Natural killer cell (primary cell): ENCODE measurements at regions of chr20 and their contacts with region 1.

Region 1: GRCh38 chr20:8545212-8545611 is 413.1 kb downstream of the PLCB1 start:
- DNase-seq: no peak
- ATAC-seq: no peak
- H3K4me3 ChIP-seq: no peak overlapping the region
- H3K4me3 Mint-ChIP-seq: no peak overlapping the region
- H3K27ac ChIP-seq: no peak overlapping the region
- H3K27ac Mint-ChIP-seq: no peak overlapping the region
- H3K4me1 ChIP-seq: no peaks in the 10 kb centered on the region
- H3K4me1 Mint-ChIP-seq: peaks cover 13 to 32% of the 10 kb centered on the region in 2 donors
- H3K27me3 ChIP-seq: no peaks in the 10 kb centered on the region
- H3K27me3 Mint-ChIP-seq: no peaks in the 10 kb centered on the region
- CTCF ChIP-seq: no peak

Region 2: GRCh38 chr20:8424010-8424409 is 121.2 kb before region 1 on chr20:
- intact Hi-C with region 1: no loop called
- DNase-seq: no peak
- ATAC-seq: no peak
- H3K4me3 ChIP-seq: no peak overlapping the region
- H3K4me3 Mint-ChIP-seq: no peak overlapping the region
- H3K27ac ChIP-seq: no peak overlapping the region
- H3K27ac Mint-ChIP-seq: no peak overlapping the region
- H3K4me1 ChIP-seq: peaks cover 6% of the 10 kb centered on the region
- H3K4me1 Mint-ChIP-seq: peaks cover 20 to 40% of the 10 kb centered on the region in 2 donors
- H3K27me3 ChIP-seq: no peaks in the 10 kb centered on the region
- H3K27me3 Mint-ChIP-seq: no peaks in the 10 kb centered on the region
- CTCF ChIP-seq: no peak

Region 3: DNA sequence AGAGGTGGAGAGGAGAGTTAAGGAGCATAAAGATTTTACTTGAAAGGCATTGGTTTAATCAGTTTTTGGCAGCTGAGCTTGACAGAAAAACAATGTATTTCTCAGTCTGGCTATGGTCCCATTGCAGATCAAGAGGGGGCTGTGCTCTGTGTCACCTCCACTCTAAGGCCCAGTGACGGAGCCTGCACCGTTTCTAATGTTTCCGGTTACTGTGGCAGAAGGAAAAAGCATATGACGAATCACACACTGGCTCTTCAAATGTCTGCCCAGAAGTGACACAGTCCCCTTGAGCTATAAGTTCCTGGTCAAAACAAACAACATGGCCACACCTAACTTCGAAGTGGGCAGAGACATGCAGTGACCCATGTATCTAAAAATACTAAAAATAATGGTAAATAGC is 41.2 kb before region 1 on chr20:
- intact Hi-C with region 1: loop called (anchors 5 kb)
- DNase-seq: no peak
- ATAC-seq: no peak
- H3K4me3 ChIP-seq: no peak overlapping the region
- H3K4me3 Mint-ChIP-seq: no peak overlapping the region
- H3K27ac ChIP-seq: no peak overlapping the region
- H3K27ac Mint-ChIP-seq: no peak overlapping the region
- H3K4me1 ChIP-seq: no peaks in the 10 kb centered on the region
- H3K4me1 Mint-ChIP-seq: peaks cover 35 to 36% of the 10 kb centered on the region in 2 donors
- H3K27me3 ChIP-seq: no peaks in the 10 kb centered on the region
- H3K27me3 Mint-ChIP-seq: no peaks in the 10 kb centered on the region
- CTCF ChIP-seq: no peak